ENCODE measurements at regions of chr15 and their contacts with region 1.

Region 1: GRCh38 chr15:55026381-55026780 is 170.4 kb downstream of the RSL24D1 start:
- H3K4me3 Mint-ChIP-seq: no peak overlapping the region
- H3K27ac Mint-ChIP-seq: peak overlapping the region; percentile 11
- H3K4me1 Mint-ChIP-seq: peaks cover 17% of the 10 kb centered on the region
- H3K27me3 Mint-ChIP-seq: no peaks in the 10 kb centered on the region

Region 2: GRCh38 chr15:54960266-54960665 is 66.1 kb before region 1 on chr15:
- intact Hi-C with region 1: loop called (anchors 10 kb)
- H3K4me3 Mint-ChIP-seq: no peak overlapping the region
- H3K27ac Mint-ChIP-seq: no peak overlapping the region
- H3K4me1 Mint-ChIP-seq: no peaks in the 10 kb centered on the region
- H3K27me3 Mint-ChIP-seq: no peaks in the 10 kb centered on the region

Measured in dendritic cell treated with granulocyte-macrophage colony-stimulating factor and Interleukin-4, amounts not matched to agents 40 ng/mL and 50 ng/mL, for 4 days (primary cell).